Left ventricle myocardium inferior (tissue), 1 donor: ENCODE measurements at regions of chr6 and their contacts with region 1.

Region 1: GRCh38 chr6:134063966-134064445 is 11.6 kb upstream of the SLC2A12 start:
- DNase-seq: peak; percentile 19
- H3K4me3 ChIP-seq: no peak overlapping the region
- H3K27ac ChIP-seq: no peak overlapping the region
- H3K4me1 ChIP-seq: peaks cover 27% of the 10 kb centered on the region
- H3K27me3 ChIP-seq: no peaks in the 10 kb centered on the region
- CTCF ChIP-seq: peak; percentile 84

Region 2: DNA sequence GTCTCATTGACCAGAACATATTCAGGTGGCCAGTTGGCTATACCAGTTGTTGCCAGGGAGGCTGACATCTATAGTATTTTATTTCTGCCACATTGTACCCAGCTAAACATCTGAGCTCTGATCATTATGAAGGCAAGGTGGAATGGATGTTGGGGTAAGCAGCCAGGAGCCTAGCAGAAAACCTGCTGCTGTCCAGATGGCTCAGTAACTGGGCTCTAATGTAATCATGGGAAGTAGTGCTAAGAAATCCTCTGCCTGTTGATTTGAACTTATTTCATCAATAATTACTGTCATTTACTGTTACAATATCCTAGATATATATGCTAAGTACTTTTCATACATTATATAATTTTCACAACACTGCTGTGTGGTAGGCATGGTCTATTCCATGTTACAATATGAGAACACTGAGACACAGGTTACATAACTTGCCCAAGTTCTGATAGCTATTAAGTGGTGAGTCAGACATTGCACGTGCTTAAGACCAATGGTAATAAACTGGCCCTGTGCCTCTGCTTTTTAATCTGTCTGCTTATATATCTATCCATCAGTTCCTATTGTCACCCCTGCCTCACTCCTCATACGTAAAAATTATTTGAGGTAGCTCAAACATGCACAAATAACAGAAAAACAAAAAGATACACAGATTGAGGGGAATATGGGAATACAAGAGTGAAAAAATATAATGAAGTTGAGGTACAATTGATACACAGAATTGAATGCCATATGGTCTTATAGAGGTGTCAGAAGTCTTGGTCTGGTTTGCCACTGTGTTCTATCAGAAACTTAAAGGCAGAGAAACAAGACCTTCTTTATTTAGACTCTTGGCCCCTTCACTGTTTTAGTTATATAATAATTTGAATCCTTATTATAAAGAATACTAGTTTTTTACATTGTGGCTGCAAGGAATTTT is 85.8 kb before region 1 on chr6:
- intact Hi-C with region 1: loop called (anchors 5 kb)
- DNase-seq: no peak
- H3K4me3 ChIP-seq: no peak overlapping the region
- H3K27ac ChIP-seq: peak overlapping the region; percentile 22
- H3K4me1 ChIP-seq: peaks cover 27% of the 10 kb centered on the region
- H3K27me3 ChIP-seq: no peaks in the 10 kb centered on the region
- CTCF ChIP-seq: no peak

Region 3: DNA sequence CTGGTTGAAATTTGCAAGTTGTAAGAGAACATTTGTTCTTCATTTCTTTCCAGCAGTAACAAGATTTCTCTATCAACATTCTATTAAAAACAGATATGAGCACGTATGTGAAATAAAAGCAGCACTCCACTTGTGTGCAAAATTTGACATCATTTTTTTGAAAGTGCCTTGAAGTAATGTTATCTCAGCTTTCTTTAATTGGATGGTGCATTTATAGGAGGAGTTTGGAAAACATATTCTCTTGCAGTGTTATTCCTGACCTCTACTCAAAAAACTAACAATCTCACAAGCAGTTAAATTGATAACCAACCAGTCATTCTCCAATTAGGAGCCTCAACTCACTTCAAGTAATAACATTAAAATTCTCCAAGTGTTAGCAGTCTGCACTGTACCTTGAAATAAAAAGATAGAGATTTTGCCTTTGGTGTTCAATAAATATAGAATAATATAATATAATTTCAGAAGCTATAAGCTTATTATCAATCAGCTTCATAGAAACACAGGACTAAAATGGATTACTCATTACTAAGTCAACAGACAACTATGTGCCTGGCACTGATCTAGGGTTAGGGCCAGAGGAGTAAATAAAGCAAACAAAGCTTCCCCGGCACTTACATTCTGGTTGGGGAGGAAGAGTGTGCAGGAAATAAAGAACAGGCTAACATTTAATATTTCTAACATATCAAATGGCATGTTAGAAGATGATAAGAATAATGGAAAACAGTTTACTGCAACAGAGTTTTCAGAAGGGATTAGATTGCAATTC is 402.9 kb after region 1 on chr6:
- intact Hi-C with region 1: no loop called
- DNase-seq: no peak
- H3K4me3 ChIP-seq: no peak overlapping the region
- H3K27ac ChIP-seq: no peak overlapping the region
- H3K4me1 ChIP-seq: peaks cover 5% of the 10 kb centered on the region
- H3K27me3 ChIP-seq: no peaks in the 10 kb centered on the region
- CTCF ChIP-seq: no peak